Prostate gland (tissue), 2 donors: ENCODE measurements at regions of chr10 and their contacts with region 1.

Region 1: DNA sequence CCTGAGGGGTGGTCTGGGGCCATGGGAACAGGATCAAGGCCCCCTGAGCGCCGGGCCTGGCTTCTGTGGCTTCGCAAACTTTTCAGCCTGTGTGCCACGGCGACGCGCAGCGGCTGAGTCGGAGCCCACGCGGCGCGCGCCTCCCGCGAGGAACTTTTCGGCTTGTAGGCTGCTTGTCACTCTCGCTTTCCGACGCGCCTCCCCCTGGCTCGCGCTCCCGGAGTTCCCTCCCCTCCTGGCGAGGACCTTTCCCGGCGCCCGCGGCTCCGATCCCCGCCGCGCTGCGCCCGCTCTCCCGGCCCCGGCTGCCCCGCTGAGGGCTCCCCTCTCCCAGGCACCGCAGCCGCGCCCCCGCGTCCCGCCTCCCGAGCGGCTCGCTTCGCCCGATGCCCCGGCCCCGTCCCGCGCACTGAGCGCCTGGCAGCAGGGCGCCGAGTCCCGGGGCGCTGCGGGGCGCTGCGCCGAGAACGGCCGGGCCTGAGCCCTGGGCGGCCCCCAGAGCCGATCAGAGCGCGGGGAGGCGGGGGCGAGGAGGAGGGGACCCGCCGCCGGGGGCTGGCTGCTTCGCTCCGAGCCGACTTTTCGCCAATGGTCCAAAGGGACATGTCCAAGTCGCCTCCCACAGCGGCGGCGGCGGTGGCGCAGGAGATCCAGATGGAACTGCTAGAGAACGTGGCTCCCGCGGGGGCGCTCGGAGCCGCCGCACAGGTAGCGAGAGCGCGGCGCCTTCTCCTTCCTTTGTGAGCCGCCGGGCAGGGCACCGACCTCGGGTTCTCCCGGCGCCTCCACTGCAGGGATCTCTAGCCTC is at the start of gene CACNB2:
- DNase-seq: peak; percentile 60
- H3K4me3 ChIP-seq: peak within 1 kb of the TSS; percentile 57 to 59
- H3K27ac ChIP-seq: peak within 1 kb of the TSS; percentile 82 to 88
- H3K4me1 ChIP-seq: no peaks in the 10 kb centered on the region
- H3K27me3 ChIP-seq: no peaks in the 10 kb centered on the region
- CTCF ChIP-seq: no peak
- POLR2A ChIP-seq: no peak
- total RNA-seq, gene CACNB2: 5.5 to 17.4 TPM

Region 2: DNA sequence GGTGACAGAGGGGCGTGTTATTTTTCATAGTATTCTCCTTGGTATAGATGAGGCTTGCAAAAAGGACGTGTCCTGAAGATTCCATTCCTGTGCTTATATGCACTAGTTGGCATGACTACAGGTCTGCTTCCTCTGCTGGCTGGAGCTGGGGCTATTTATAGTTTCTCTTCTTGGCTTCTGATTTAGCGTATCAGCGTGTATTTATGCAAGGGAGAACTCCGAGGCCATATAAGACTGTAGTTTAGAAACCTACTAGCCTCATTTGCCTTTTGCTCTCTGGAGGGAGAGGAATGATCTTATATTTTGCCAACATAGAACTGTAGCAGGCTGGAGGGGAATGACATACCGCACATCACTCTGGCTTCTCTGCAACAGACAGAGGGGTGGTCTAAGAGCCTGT is 39.5 kb after region 1 on chr10:
- intact Hi-C with region 1: loop called (anchors 5 kb)
- DNase-seq: peak; percentile 38
- H3K4me3 ChIP-seq: no peak overlapping the region
- H3K27ac ChIP-seq: peak overlapping the region; percentile 64 to 67
- H3K4me1 ChIP-seq: peaks cover 9% of the 10 kb centered on the region
- H3K27me3 ChIP-seq: no peaks in the 10 kb centered on the region
- CTCF ChIP-seq: no peak
- POLR2A ChIP-seq: no peak

Region 3: DNA sequence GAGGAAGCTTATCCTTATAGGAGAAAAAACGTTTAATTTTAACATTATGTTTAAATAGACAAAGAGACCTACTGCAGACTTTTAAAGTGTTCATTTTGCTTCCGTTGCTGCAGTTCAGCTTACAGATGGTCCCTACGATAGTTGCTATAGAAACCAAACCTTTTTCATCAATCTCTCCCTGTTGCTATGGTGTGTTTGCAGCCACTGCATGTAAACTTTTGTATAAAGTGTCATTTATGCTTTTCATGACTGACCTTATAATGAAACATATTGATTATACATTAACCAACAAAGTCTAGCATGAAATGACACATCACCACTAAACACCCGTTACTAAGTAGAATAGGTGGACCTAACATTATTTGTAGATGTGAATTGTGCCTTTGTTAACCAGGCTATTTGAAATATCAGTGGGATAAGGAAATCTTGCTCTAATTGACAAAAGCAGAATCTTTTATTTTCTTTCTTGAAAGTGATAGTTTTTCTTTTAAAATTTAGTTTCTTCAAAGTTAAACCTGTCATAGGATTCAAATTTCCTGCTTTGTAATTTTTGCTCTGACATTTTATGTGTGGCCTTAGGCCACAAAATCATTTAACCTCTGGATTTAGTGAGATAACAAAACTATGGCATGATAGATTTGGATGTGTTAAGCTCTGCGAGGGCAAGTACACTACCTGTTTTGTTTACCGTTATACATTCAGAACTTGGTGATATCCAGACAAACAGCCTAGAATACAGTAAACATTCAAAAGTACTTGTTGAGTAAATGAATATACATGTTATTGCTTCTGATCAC is 63.9 kb after region 1 on chr10:
- intact Hi-C with region 1: loop called (anchors 5 kb)
- DNase-seq: no peak
- H3K4me3 ChIP-seq: no peak overlapping the region
- H3K27ac ChIP-seq: peak overlapping the region in 1 of 2 donors; percentile 14
- H3K4me1 ChIP-seq: peaks cover 2% of the 10 kb centered on the region
- H3K27me3 ChIP-seq: no peaks in the 10 kb centered on the region
- CTCF ChIP-seq: no peak
- POLR2A ChIP-seq: no peak

Region 4: GRCh38 chr10:18214691-18215563 is 74.6 kb after region 1 on chr10:
- intact Hi-C with region 1: no loop called
- DNase-seq: peak; percentile 33
- H3K4me3 ChIP-seq: no peak overlapping the region
- H3K27ac ChIP-seq: no peak overlapping the region
- H3K4me1 ChIP-seq: no peaks in the 10 kb centered on the region
- H3K27me3 ChIP-seq: no peaks in the 10 kb centered on the region
- CTCF ChIP-seq: peak in 3 of 4 experiments; percentile 51 to 68 (median 63)
- POLR2A ChIP-seq: no peak

Region 5: GRCh38 chr10:18279173-18279572 is 138.8 kb after region 1 on chr10:
- intact Hi-C with region 1: no loop called
- DNase-seq: no peak
- H3K4me3 ChIP-seq: no peak overlapping the region
- H3K27ac ChIP-seq: no peak overlapping the region
- H3K4me1 ChIP-seq: no peaks in the 10 kb centered on the region
- H3K27me3 ChIP-seq: no peaks in the 10 kb centered on the region
- CTCF ChIP-seq: no peak
- POLR2A ChIP-seq: no peak